ENCODE measurements at regions of chr14 and their contacts with region 1.

Region 1: GRCh38 chr14:33943096-33943884 is 7.6 kb downstream of the EGLN3 start:
- DNase-seq: no peak
- H3K4me3 Mint-ChIP-seq: no peak overlapping the region
- H3K27ac Mint-ChIP-seq: no peak overlapping the region
- H3K4me1 Mint-ChIP-seq: peaks cover 74% of the 10 kb centered on the region
- H3K27me3 Mint-ChIP-seq: peaks cover 10% of the 10 kb centered on the region

Region 2: GRCh38 chr14:33917661-33918060 is 25.6 kb before region 1 on chr14:
- intact Hi-C with region 1: loop called (anchors 1 kb)
- DNase-seq: no peak
- H3K4me3 Mint-ChIP-seq: no peak overlapping the region
- H3K27ac Mint-ChIP-seq: no peak overlapping the region
- H3K4me1 Mint-ChIP-seq: peaks cover 18% of the 10 kb centered on the region
- H3K27me3 Mint-ChIP-seq: peaks cover 5% of the 10 kb centered on the region